GM13977 (cell line): ENCODE measurements at regions of chr2 and their contacts with region 1.

Region 1: GRCh38 chr2:230602562-230603230 is 109.9 kb upstream of the CAB39 start:
- DNase-seq: peak; percentile 49
- CTCF ChIP-seq: no peak

Region 2: GRCh38 chr2:230007931-230008707 is 594.6 kb before region 1 on chr2:
- in situ Hi-C with region 1: loop called (anchors 25 kb)
- DNase-seq: peak; percentile 61
- CTCF ChIP-seq: peak; percentile 78

Region 3: GRCh38 chr2:230202430-230203109 is 400.1 kb before region 1 on chr2:
- in situ Hi-C with region 1: loop called (anchors 10 kb)
- DNase-seq: peak; percentile 35
- CTCF ChIP-seq: peak; percentile 62

Region 4: DNA sequence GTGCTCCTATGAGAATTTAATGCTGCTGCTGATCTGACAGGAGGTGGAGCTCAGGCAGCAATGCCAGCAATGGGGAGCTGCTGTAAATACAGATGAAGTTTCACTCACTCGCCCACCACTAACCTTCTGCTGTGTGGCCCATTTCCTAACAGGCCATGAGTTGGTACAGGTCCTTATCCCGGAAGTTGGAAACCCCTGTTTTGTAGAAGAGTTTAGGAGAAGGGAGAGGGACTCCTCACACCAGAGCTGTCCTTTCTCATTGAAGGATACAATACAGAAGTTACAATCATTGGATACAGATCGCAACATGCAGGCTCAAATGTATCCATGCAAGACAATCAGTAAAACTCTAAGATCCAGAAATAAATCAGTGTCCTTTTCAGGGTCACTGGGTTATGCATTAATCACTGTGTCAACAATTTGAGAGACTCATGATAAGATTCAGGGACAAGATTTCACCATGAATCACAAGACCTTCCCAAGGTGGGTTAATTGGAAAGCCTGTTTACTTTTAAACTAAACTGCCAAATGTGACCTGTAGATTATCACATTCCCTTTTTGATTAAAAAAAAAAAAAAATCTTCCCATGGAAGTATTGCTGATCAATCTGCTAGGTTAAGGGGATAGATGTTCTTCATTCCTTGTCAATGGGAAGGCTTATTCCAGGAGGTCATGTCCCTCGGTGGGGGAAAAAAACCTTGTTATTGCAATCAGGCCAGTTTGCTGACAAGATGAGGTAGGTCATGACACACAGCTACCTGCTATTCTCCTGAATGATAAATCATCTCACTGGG is 89.5 kb before region 1 on chr2:
- in situ Hi-C with region 1: no loop called
- DNase-seq: no peak
- CTCF ChIP-seq: no peak